ENCODE measurements at regions of chr6 and their contacts with region 1.

Region 1: DNA sequence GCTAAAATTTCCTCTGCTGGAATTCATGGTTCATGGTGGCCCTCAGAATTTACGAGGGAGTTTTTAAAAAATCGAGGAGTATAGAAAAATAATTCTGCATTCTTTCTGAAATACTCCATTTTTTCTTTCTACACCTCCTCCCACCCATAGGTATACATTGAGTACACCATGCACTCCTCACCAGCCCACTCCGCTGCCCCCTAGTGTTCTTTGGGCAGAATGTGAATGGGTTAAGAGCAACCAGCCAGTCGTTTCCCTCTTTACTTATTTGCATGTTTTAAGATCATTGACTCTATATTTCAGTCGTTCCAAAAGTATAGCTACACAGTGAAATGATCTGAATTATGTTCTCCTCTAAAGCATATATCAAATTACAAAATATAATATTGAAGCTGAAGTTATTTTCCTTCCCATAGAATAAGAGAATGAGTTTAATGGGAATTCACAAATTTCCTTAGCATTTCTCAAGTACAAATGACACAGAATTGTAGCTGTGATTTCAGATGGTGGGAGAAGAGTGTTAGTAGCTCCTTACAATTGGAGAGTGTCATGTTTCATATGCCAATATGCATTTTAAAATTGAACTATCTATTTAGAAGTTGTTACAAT is 977.7 kb upstream of the SLC35B3 start:
- DNase-seq: peak in 1 of 5 donors; percentile 30
- ATAC-seq: peak in 3 of 4 donors; percentile 64 to 71 (median 65)
- H3K4me3 ChIP-seq: no peak overlapping the region
- H3K27ac ChIP-seq: no peak overlapping the region
- H3K4me1 ChIP-seq: no peaks in the 10 kb centered on the region
- H3K27me3 ChIP-seq: no peaks in the 10 kb centered on the region
- CTCF ChIP-seq: peak in 9 of 12 donors; percentile 34 to 61 (median 51)
- POLR2A ChIP-seq: no peak

Region 2: GRCh38 chr6:9250852-9251251 is 162.2 kb before region 1 on chr6:
- intact Hi-C with region 1: loop called in 9 of 10 experiments (anchors 2 to 5 kb)
- DNase-seq: peak in 1 of 5 donors; percentile 26
- ATAC-seq: peak in 2 of 4 donors; percentile 34 to 62
- H3K4me3 ChIP-seq: no peak overlapping the region
- H3K27ac ChIP-seq: no peak overlapping the region
- H3K4me1 ChIP-seq: no peaks in the 10 kb centered on the region
- H3K27me3 ChIP-seq: no peaks in the 10 kb centered on the region
- CTCF ChIP-seq: peak in 11 of 12 donors; percentile 30 to 55 (median 40)
- POLR2A ChIP-seq: no peak

Region 3: GRCh38 chr6:9257211-9257610 is 155.8 kb before region 1 on chr6:
- intact Hi-C with region 1: loop called in 5 of 10 experiments (anchors 5 kb)
- DNase-seq: no peak
- ATAC-seq: no peak
- H3K4me3 ChIP-seq: no peak overlapping the region
- H3K27ac ChIP-seq: no peak overlapping the region
- H3K4me1 ChIP-seq: no peaks in the 10 kb centered on the region
- H3K27me3 ChIP-seq: no peaks in the 10 kb centered on the region
- CTCF ChIP-seq: no peak
- POLR2A ChIP-seq: no peak